Cardiac septum (tissue), 1 donor: ENCODE measurements at regions of chr3 and their contacts with region 1.

Region 1: DNA sequence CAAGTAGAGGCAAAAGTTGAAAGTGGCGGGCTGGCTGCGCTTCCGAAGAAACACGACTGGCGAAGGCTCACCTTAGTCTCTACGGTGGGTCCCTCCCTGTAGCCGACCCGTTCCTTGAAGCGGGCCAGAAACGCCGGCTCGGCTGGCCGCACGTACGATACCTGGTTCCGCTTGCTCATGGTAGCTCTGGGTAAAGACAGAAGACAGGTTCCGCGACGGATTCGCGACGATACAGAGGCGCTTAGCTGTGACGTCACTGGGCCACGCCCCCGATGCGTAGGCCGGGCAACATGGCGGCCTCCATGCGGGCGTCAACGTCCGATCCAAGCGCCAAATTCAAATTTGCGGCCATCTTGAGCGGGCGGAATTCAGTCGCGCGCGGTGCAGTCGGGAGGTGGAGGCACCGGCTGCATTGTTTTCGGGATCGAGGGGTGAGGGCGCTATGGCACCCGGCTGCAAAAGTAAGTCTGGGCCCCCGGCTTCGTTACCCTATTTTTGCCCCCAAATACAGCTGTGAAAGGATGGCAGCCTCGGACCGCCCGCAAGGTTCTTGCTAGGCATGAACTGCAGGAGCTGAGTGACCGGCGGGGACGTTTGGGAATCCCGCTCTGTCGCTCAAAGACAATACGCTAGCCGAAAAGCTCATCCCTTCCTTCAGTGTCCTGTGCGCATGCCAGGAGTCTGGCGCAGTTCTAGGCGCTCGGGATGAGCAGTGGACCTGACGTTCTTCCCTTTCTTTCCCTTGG is at the starts of genes KIAA1143 and KIF15:
- DNase-seq: peak; percentile 98
- total RNA-seq, gene KIAA1143: 24.0 TPM
- total RNA-seq, gene KIF15: 0.30 TPM

Region 2: GRCh38 chr3:44338010-44338827 is 423.4 kb before region 1 on chr3 and contains the start of gene TCAIM:
- intact Hi-C with region 1: loop called (anchors 5 kb)
- DNase-seq: peak; percentile 99
- total RNA-seq, gene TCAIM: 36.5 TPM

Region 3: DNA sequence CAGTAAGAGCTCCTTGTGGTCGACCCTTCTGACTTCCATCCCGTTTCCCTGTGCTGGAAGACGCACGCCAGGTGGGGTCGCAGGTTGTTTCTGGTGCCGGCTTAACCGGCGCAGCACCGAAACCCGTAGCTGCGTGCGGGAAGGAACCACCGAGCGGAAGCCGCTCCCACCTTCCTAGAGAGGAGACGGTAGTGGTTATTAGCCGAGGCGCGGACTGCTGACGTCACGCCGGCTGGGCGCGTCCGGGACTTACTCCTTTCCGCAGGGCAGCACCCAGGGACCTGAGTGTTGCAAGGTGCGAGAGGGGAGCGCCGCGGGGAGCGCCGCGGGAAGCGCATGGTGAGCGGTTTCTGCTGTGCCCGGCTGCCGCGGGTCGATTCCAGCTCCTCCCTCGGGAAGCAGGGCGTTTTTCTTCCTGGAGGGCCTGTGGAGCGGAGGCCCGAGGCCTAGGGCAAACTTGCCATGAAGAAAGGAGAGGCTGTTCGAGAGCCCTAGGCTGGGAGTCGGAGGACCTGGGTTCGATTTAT is 32.1 kb before region 1 on chr3 and contains the start of gene ZNF501:
- intact Hi-C with region 1: loop called (anchors 2 kb)
- DNase-seq: peak; percentile 97
- total RNA-seq, gene ZNF501: 4.4 TPM

Region 4: GRCh38 chr3:44861412-44862220 is 100.0 kb after region 1 on chr3 and contains the start of gene TMEM42:
- intact Hi-C with region 1: loop called (anchors 5 kb)
- DNase-seq: peak; percentile 96
- total RNA-seq, gene TMEM42: 10.5 TPM

Region 5: DNA sequence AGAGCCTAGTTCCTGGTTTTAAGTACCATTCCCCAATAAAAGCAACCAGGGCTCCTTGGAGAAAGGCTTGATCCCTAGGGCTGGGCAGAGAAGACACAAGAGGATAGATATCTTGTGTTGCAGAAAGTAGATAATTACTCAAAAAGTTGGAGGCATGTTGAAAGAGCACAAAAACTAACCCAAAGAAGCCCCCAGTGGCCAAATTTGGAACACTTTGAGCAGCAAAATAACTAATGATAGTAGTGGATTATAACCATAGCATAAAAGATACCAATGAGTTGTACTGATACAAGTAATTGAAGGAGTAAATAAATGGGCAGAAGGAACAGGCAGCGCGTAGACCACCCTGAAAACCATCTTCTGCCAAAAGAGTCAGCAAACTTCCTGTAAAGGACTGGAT is 226.5 kb after region 1 on chr3:
- intact Hi-C with region 1: no loop called
- DNase-seq: no peak